MCF 10A (cell line): ENCODE measurements at regions of chr4 and their contacts with region 1.

Region 1: DNA sequence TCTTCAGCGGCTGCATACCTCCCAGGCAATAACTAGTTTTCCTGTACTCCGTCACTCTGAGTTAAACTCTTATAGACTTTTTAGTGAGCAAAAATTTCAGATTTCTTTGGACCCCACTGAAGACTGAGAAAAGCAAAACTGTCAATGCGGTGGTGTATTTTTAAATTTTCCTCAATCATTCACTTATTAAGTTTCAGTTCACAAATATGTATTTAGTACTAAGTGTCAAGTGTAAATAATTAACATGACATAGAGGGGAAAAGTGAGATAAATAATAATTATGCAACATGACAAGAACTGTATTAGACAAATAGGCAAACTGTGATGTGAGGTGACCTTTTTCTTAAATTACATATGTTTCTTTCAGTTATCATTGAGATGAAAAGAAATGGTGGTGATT is 124.4 kb downstream of the NAF1 start:
- DNase-seq: no peak
- H3K4me3 Mint-ChIP-seq: no peak overlapping the region
- H3K27ac Mint-ChIP-seq: no peak overlapping the region
- H3K4me1 Mint-ChIP-seq: no peaks in the 10 kb centered on the region
- H3K27me3 Mint-ChIP-seq: no peaks in the 10 kb centered on the region
- CTCF ChIP-seq: no peak

Region 2: GRCh38 chr4:162645381-162645780 is 396.9 kb before region 1 on chr4:
- CTCF ChIA-PET with region 1: interaction called, 7 read pairs
- POLR2A ChIA-PET with region 1: no interaction called
- intact Hi-C with region 1: loop called (anchors 1 kb)
- DNase-seq: peak; percentile 18
- H3K4me3 Mint-ChIP-seq: no peak overlapping the region
- H3K27ac Mint-ChIP-seq: no peak overlapping the region
- H3K4me1 Mint-ChIP-seq: no peaks in the 10 kb centered on the region
- H3K27me3 Mint-ChIP-seq: no peaks in the 10 kb centered on the region
- CTCF ChIP-seq: peak; percentile 17

Region 3: DNA sequence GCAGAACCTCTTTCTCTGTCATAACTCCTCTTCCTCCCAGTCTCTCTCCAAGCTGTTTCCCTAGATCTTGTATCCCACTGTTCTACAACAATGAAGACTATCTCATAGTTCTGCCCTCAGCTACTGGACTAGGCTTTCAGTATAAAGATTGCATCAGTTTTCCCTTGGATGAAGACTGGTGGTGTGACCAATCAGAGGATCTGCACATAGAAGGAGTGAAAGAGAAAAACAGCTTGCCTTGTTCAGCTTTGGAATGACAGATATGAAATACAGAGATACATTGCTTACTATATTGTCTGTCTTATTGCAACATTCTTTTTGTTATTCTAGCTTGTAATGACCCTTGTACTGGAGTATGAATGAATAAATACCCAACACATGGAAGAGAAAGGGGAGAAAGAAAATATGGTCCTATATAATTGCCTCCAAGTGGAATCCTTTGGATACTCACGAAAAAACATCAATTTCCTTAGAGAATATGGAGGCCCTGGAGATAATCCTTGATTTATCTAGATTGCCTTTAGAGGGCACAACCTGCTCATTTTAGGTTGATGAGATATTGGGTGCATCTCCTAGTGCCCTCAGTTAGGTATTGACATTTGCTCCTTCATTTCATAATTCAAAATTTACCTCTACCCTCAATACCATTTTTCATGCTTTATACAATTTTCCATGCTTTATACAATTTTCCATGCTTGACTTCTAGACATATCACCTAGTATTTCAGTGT is 271.4 kb before region 1 on chr4:
- CTCF ChIA-PET with region 1: interaction called, 6 read pairs
- POLR2A ChIA-PET with region 1: interaction called, 3 read pairs
- intact Hi-C with region 1: loop called (anchors 1 kb)
- DNase-seq: no peak
- H3K4me3 Mint-ChIP-seq: no peak overlapping the region
- H3K27ac Mint-ChIP-seq: no peak overlapping the region
- H3K4me1 Mint-ChIP-seq: peaks cover 19% of the 10 kb centered on the region
- H3K27me3 Mint-ChIP-seq: no peaks in the 10 kb centered on the region
- CTCF ChIP-seq: peak; percentile 20

Region 4: DNA sequence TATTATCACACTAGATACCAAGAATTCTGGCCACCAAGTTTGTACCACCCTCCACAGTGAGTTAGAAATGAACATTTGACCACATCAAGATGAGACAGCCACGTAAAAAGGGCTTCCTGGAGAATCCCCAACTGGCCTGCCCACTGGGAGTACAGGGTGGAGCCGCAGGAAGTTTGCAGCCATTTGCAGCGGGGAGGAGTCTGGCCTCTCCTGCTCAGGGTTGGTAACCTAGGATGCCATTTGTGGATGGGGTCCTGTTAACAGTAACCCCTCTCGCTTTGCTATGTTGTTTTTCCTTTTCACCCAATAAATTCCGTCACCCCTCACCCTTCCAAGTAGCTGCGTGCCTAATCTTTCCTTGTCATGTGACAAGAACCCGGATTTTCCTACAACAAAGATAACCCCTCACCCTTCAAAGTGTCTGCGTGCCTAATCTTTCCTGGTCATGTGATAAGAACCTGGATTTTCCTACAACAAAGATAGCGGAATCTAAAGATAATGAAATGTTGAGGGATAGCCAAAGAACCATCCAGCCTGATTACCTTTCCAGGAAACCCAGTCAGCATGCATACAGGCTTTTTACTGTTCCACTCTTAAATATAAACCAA is 121.0 kb before region 1 on chr4:
- CTCF ChIA-PET with region 1: no interaction called
- POLR2A ChIA-PET with region 1: no interaction called
- intact Hi-C with region 1: no loop called
- DNase-seq: no peak
- H3K4me3 Mint-ChIP-seq: no peak overlapping the region
- H3K27ac Mint-ChIP-seq: no peak overlapping the region
- H3K4me1 Mint-ChIP-seq: no peaks in the 10 kb centered on the region
- H3K27me3 Mint-ChIP-seq: no peaks in the 10 kb centered on the region
- CTCF ChIP-seq: no peak

Region 5: GRCh38 chr4:163217505-163217904 is 175.2 kb after region 1 on chr4:
- CTCF ChIA-PET with region 1: no interaction called
- POLR2A ChIA-PET with region 1: no interaction called
- intact Hi-C with region 1: no loop called
- DNase-seq: no peak
- H3K4me3 Mint-ChIP-seq: no peak overlapping the region
- H3K27ac Mint-ChIP-seq: no peak overlapping the region
- H3K4me1 Mint-ChIP-seq: no peaks in the 10 kb centered on the region
- H3K27me3 Mint-ChIP-seq: no peaks in the 10 kb centered on the region
- CTCF ChIP-seq: no peak